Astrocyte of the cerebellum (primary cell): ENCODE measurements at regions of chr11 and their contacts with region 1.

Region 1: DNA sequence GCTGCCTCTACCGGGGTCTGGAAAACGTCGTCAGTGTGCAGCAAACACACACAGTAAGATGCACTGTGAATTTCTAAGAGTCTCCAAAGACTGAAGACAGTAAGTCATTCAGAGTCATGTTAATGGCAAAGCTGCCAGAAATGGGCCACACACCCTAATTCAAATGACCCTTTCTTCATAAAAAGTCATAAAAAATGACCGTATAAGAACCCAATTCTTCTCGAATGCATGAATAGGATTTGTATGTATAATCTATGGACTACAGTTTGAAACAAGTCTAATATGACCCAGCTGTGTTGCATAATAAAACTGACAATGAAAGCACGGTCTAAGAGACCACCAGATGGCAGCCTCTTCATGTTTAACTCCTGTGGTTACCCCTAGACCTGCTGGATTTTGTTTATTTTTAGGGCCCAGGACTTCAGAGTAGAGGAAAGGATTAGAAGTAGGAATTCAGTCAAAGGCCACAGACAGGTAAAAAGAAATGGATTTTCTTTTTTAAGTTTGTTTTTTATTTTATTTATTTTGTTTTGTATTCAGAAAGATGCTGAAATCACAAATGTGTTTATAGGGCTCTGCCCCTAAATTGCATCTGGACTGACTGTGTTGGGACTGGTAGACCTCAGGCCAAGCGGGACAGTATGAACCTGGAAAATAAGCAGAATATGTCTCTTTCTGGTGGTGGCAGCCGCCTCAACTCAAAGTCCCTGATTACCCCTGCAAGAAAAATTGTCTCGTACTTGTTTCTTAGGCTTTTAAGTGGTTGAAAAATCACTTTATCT is 32.1 kb upstream of the SLC5A12 start:
- DNase-seq: peak; percentile 59
- H3K4me3 ChIP-seq: no peak overlapping the region
- CTCF ChIP-seq: peak; percentile 74

Region 2: GRCh38 chr11:27124514-27125264 is 370.8 kb after region 1 on chr11:
- in situ Hi-C with region 1: loop called (anchors 25 kb)
- DNase-seq: no peak
- H3K4me3 ChIP-seq: no peak overlapping the region
- CTCF ChIP-seq: no peak